ENCODE measurements at regions of chr3 and their contacts with region 1.

Region 1: GRCh38 chr3:177516158-177517011 is 319.1 kb upstream of the TBL1XR1 start:
- DNase-seq: no peak
- ATAC-seq: peak; percentile 76

Region 2: DNA sequence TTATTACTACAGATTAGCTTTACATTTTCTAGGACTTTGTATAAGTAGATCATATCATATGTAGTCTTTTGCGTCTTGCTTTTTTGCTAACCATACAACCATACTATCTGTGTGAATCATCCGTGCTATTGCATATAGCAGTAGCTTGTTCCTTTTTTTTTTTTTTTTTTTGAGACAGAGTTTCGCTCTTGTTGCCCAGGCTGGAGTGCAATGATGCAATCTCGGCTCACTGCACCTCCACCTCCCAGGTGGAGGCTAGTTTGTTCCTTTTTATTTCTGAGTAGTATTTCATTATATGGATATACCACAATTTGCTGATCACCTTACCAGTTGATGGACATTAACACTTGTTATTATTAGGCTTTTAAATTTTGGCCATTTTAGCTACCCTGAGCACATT is 264.6 kb before region 1 on chr3:
- intact Hi-C with region 1: no loop called
- DNase-seq: no peak
- ATAC-seq: no peak

Region 3: GRCh38 chr3:177615015-177615414 is 98.6 kb after region 1 on chr3:
- intact Hi-C with region 1: loop called (anchors 5 kb)
- DNase-seq: peak; percentile 83
- ATAC-seq: peak; percentile 86

Region 4: GRCh38 chr3:177705976-177706823 is 189.8 kb after region 1 on chr3:
- intact Hi-C with region 1: loop called (anchors 10 kb)
- DNase-seq: peak; percentile 76
- ATAC-seq: peak; percentile 94

Region 5: DNA sequence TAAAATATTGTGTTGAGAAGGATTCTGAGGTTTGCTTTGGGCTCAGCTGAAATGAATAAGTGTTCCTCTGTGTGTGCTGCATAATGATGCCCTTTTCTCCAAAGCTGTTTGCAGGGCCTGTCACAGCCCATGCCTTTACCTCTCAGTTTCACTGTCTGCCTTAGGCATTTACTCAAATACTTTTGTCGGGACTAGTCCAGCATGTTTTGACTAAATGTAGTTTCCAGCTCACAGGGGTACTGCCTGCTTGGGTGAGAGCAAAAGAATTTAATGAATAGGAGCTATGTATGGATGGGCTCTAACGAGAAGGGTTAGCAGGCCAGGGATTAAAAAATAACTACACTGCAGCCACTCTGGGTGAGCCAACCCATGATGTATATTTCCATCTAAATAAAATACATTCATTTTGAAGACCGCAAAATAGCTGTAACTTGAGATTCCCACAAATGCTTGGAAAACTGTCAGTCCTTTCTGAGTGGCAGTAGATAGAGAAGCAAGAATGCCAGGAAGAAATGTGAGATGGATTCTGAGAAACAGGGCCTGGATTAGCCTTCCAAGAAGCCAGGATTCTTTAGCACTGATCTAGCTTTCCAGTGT is 230.1 kb after region 1 on chr3:
- intact Hi-C with region 1: no loop called
- DNase-seq: no peak
- ATAC-seq: no peak

Region 6: DNA sequence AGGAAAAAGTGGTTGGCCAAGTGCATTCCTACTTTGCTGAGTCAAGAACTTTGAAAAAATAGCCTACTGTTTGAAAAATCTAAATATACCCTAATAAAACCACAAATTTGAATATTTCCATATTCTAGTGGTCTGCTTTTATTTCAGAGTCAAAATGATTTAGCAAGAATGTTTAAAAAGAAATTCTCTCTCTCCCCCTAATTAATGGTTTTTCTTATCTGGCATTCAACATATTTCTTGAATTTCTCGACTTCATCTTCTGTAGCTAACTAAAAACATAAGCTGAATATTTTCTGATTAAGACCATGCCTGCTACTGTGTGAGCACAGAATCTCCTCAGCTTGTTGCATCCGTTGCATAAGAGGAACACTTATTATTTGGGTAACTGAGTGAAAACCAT is 244.4 kb after region 1 on chr3:
- intact Hi-C with region 1: loop called (anchors 2 kb)
- DNase-seq: no peak
- ATAC-seq: no peak